ENCODE measurements at regions of chr7 and their contacts with region 1.

Region 1: DNA sequence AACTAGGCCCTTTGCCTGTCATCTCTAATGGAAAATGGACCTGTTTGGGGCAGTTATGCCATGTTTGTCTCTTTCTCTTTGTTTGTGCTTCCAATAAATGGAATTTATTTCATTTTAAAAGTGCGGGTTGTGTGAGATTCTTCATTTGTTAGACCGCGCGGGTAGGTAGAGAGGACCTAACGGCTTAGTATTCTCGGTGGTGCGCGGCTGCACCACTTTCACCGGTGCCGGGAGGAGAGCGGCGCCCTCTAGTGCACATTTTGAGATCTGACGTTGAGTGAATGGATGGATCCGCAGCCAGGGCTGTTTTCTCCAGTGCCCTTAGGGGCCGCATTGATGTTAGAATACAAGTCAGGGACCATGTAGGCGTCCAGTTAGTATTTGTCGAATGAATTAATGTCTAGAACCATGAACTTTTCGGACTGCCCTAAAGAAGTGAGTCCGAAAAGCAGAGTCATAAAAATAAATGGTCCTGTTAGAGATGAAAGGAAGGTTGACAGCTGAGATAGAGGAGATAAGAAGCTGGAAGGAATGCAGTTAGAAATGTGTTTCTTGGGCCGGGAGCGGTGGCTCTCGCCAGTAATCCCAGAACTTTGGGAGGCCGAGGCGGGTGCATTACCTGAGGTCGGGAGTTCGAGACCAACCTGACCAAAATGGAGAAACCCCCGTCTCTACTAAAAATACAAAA is 29.3 kb upstream of the GIMAP8 start:
- DNase-seq: peak; percentile 80
- H3K4me3 ChIP-seq: no peak overlapping the region
- H3K27ac ChIP-seq: no peak overlapping the region
- H3K4me1 ChIP-seq: peaks cover 4% of the 10 kb centered on the region
- H3K27me3 ChIP-seq: no peaks in the 10 kb centered on the region
- CTCF ChIP-seq: peak; percentile 94

Region 2: DNA sequence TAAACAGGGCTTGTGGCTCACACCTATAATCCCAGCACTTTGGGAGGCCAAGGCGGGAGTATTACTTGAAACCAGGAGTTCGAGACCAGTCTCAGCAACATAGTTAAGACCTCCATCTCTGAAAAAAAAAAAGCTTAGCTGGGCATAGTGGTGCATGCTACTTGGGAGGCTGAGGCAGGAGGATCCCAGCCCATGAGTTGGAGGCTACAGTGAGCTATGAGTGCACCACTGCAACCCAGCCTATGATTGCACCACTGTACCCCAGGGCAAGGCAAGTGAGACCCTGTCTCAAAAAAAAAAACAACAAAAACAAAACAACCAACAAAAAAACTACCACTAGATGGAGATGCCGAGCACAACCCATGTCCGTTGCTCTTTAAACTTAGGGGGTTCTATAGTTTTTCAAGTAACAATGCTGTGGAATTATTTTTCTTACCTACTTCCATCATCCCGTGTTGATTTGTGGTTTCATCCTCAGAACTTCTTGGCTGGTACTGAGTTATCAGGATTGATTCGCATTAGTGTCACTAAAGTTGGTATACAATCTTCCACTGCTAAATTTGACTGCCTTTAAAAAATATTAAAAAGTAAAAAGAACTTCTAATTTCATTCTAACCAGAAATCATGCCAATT is 64.8 kb before region 1 on chr7:
- intact Hi-C with region 1: loop called (anchors 5 kb)
- DNase-seq: no peak
- H3K4me3 ChIP-seq: no peak overlapping the region
- H3K27ac ChIP-seq: no peak overlapping the region
- H3K4me1 ChIP-seq: peaks cover 1% of the 10 kb centered on the region
- H3K27me3 ChIP-seq: no peaks in the 10 kb centered on the region
- CTCF ChIP-seq: peak; percentile 76

Region 3: DNA sequence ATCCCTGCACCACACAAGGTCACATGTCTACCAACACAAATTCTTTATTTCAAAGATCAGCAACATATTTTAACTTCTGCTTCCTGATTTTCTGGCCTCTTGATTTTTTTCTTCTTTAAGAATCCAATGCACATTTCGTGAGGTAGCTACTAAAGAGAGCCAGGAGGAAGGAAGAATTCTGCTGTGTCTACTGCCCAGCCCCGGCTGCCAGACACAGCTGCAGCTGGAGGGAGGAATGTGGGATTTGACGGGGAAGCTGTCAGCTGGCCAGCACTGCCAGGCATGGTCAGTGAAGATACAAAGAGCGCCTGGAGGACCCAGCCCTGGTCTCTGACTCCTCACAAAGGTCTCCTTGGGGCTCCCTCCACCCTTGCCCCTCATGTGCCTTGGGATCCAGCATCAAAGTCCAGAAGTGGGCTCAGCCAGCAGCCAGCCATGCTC is 424.3 kb after region 1 on chr7:
- intact Hi-C with region 1: no loop called
- DNase-seq: peak; percentile 63
- H3K4me3 ChIP-seq: no peak overlapping the region
- H3K27ac ChIP-seq: peak overlapping the region; percentile 23
- H3K4me1 ChIP-seq: peaks cover 13% of the 10 kb centered on the region
- H3K27me3 ChIP-seq: no peaks in the 10 kb centered on the region
- CTCF ChIP-seq: no peak